ENCODE measurements at regions of chr3 and their contacts with region 1.

Region 1: GRCh38 chr3:116757315-116757714 is 47.7 kb downstream of the TUSC7 start:
- DNase-seq: no peak
- H3K4me3 ChIP-seq: no peak overlapping the region
- H3K27ac ChIP-seq: no peak overlapping the region
- H3K4me1 ChIP-seq: no peaks in the 10 kb centered on the region
- H3K27me3 ChIP-seq: no peaks in the 10 kb centered on the region
- CTCF ChIP-seq: no peak
- EP300 ChIP-seq: no peak
- POLR2A ChIP-seq: no peak

Region 2: GRCh38 chr3:115819785-115820384 is 937.4 kb before region 1 on chr3:
- intact Hi-C with region 1: loop called (anchors 5 kb)
- DNase-seq: peak; percentile 73
- H3K4me3 ChIP-seq: no peak overlapping the region
- H3K27ac ChIP-seq: no peak overlapping the region
- H3K4me1 ChIP-seq: no peaks in the 10 kb centered on the region
- H3K27me3 ChIP-seq: no peaks in the 10 kb centered on the region
- CTCF ChIP-seq: peak; percentile 85 to 94 (median 88)
- EP300 ChIP-seq: no peak
- POLR2A ChIP-seq: no peak

Region 3: GRCh38 chr3:116140100-116140689 is 617.1 kb before region 1 on chr3:
- intact Hi-C with region 1: loop called (anchors 2 kb)
- DNase-seq: no peak
- H3K4me3 ChIP-seq: no peak overlapping the region
- H3K27ac ChIP-seq: peak overlapping the region in 2 of 4 donors; percentile 16 to 29
- H3K4me1 ChIP-seq: peaks cover 0 to 37% (median 30%) of the 10 kb centered on the region in 4 donors
- H3K27me3 ChIP-seq: no peaks in the 10 kb centered on the region
- CTCF ChIP-seq: peak; percentile 76 to 93 (median 87)
- EP300 ChIP-seq: no peak
- POLR2A ChIP-seq: no peak